Sigmoid colon (tissue), 7 donors: ENCODE measurements at regions of chr1 and their contacts with region 1.

Region 1: DNA sequence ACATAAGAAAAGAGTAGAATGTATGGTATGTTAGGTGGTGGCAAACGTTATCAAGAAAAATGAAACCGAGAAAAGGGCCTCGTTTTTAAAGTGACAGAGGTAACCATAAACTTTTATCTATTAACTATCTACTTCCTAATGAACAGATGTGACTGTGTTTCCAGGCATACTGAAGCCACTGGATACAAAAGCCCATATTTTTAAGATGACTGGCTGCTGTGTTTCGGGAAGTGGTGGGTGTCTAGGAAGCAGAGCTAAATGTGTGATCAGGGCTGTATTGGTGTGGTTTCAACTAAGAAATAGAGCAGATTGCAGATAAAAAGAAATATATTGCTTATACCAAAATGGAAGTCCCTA is 71.8 kb downstream of the CHRM3 start:
- DNase-seq: no peak
- H3K4me3 ChIP-seq: peak overlapping the region in 2 of 4 donors; percentile 2 to 15
- H3K27ac ChIP-seq: peak overlapping the region in 2 of 4 donors; percentile 12 to 39
- H3K4me1 ChIP-seq: peaks cover 0 to 38% (median 8%) of the 10 kb centered on the region in 4 donors
- H3K27me3 ChIP-seq: no peaks in the 10 kb centered on the region
- CTCF ChIP-seq: no peak
- EP300 ChIP-seq: no peak
- POLR2A ChIP-seq: no peak

Region 2: GRCh38 chr1:239413916-239414315 is 44.2 kb before region 1 on chr1:
- intact Hi-C with region 1: loop called (anchors 5 kb)
- DNase-seq: no peak
- H3K4me3 ChIP-seq: peak overlapping the region in 2 of 4 donors; percentile 8 to 11
- H3K27ac ChIP-seq: peak overlapping the region; percentile 48 to 83 (median 66)
- H3K4me1 ChIP-seq: peaks cover 0 to 65% (median 46%) of the 10 kb centered on the region in 4 donors
- H3K27me3 ChIP-seq: no peaks in the 10 kb centered on the region
- CTCF ChIP-seq: no peak
- EP300 ChIP-seq: no peak
- POLR2A ChIP-seq: no peak